ENCODE measurements at regions of chr20 and their contacts with region 1.

Region 1: DNA sequence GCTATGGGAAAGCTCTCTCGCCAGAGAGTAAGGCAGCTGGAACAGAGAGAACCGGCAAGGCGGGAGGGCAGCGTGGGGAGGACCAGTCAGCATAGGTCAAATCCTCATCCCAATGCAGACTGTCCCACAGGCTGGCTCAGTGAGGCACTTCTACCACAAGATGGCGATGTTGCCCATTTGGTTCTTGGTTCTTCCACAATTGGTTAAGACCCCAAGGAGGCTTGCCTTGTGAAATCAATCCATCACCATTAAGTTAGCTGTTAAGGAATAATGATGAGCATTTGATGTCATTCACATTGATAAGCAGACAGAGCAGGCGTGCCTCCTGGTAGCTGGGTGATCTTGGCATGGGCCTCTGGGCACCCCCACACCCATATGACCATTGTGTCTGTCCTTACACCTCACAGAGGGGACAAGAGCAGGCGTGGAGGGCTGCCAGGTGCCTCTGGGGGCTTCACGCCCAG is 2.4 kb downstream of the CSTL1 start:
- DNase-seq: peak; percentile 73
- ATAC-seq: peak; percentile 95
- H3K4me3 ChIP-seq: no peak overlapping the region
- H3K27ac ChIP-seq: no peak overlapping the region
- H3K4me1 ChIP-seq: no peaks in the 10 kb centered on the region
- H3K27me3 ChIP-seq: no peaks in the 10 kb centered on the region
- CTCF ChIP-seq: peak; percentile 89

Region 2: DNA sequence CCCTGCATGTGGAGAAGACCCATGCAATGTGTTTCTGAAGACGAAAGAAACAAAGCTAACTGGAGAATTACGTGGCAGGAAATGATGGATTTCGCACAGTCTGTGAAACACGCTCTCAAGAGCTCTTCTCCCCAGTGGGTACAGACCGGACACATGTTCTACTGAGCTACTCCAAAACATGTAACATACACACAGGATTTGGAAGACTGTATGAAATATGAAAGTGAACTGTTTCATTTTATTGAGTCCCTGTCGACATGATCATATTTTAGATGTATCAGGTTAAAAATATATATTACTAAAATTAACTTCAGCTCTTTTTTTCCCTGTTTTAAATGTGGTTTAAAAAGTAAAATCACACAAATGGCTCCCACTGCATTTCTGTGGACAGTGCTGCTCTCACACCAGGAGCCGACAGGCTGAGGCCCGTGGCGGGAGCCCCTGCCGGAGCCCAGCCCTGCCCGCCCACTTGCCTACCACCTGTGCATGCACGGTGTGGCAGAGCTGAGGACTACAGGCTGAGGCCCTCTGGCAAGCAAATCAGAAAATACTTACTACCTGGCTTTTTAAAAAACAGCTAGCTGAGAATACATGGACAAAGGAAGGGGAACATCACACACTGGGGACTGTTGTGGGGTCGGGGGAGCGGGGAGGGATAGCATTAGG is 150.2 kb before region 1 on chr20:
- CTCF ChIA-PET with region 1: no interaction called
- POLR2A ChIA-PET with region 1: no interaction called
- in situ Hi-C with region 1: no loop called
- intact Hi-C with region 1: no loop called
- DNase-seq: no peak
- ATAC-seq: no peak
- H3K4me3 ChIP-seq: no peak overlapping the region
- H3K27ac ChIP-seq: no peak overlapping the region
- H3K4me1 ChIP-seq: no peaks in the 10 kb centered on the region
- H3K27me3 ChIP-seq: no peaks in the 10 kb centered on the region
- CTCF ChIP-seq: no peak

Region 3: GRCh38 chr20:23492292-23492691 is 50.4 kb after region 1 on chr20:
- CTCF ChIA-PET with region 1: no interaction called
- POLR2A ChIA-PET with region 1: interaction called, 11 read pairs
- in situ Hi-C with region 1: no loop called
- intact Hi-C with region 1: no loop called
- DNase-seq: no peak
- ATAC-seq: peak; percentile 17; the same call in 1 of the 2 replicates
- H3K4me3 ChIP-seq: no peak overlapping the region
- H3K27ac ChIP-seq: no peak overlapping the region
- H3K4me1 ChIP-seq: no peaks in the 10 kb centered on the region
- H3K27me3 ChIP-seq: no peaks in the 10 kb centered on the region
- CTCF ChIP-seq: no peak

Region 4: DNA sequence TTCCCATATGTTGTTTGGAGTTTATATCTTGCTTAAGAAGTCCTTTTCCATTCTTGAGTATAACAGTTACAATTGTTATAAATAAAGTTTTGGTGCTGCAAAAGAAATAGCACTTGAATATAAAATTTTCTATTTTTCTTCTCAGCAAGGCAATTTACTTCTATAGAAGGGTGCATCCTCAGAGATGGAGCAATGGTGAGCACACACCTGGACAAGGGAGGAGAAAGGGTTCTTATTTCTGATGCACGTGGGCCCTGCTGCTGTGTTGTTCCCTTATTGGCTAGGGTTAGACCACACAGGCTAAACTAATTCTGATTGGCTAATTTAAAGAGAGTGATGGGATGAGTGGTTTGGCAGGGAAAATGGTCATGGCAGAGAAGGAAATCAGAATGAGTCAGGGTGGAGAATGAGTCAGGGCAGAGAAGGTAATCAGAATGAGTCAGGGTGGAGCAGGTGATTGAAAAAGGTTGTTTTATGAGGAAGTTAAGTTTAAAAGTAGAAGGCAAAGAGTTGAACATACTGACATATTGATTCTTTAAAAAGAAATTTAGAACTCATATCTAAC is 87.1 kb after region 1 on chr20:
- CTCF ChIA-PET with region 1: no interaction called
- POLR2A ChIA-PET with region 1: no interaction called
- in situ Hi-C with region 1: no loop called
- intact Hi-C with region 1: no loop called
- DNase-seq: no peak
- ATAC-seq: no peak
- H3K4me3 ChIP-seq: no peak overlapping the region
- H3K27ac ChIP-seq: no peak overlapping the region
- H3K4me1 ChIP-seq: no peaks in the 10 kb centered on the region
- H3K27me3 ChIP-seq: no peaks in the 10 kb centered on the region
- CTCF ChIP-seq: no peak

Region 5: GRCh38 chr20:23606652-23607049 is 164.8 kb after region 1 on chr20:
- CTCF ChIA-PET with region 1: interaction called, 3 read pairs
- POLR2A ChIA-PET with region 1: no interaction called
- in situ Hi-C with region 1: no loop called
- intact Hi-C with region 1: loop called (anchors 1 kb)
- DNase-seq: peak; percentile 58
- ATAC-seq: peak; percentile 95
- H3K4me3 ChIP-seq: no peak overlapping the region
- H3K27ac ChIP-seq: no peak overlapping the region
- H3K4me1 ChIP-seq: no peaks in the 10 kb centered on the region
- H3K27me3 ChIP-seq: no peaks in the 10 kb centered on the region; the same call in 1 of the 2 replicates
- CTCF ChIP-seq: peak; percentile 91